CD14-positive monocyte (primary cell): ENCODE measurements at regions of chr17 and their contacts with region 1.

Region 1: DNA sequence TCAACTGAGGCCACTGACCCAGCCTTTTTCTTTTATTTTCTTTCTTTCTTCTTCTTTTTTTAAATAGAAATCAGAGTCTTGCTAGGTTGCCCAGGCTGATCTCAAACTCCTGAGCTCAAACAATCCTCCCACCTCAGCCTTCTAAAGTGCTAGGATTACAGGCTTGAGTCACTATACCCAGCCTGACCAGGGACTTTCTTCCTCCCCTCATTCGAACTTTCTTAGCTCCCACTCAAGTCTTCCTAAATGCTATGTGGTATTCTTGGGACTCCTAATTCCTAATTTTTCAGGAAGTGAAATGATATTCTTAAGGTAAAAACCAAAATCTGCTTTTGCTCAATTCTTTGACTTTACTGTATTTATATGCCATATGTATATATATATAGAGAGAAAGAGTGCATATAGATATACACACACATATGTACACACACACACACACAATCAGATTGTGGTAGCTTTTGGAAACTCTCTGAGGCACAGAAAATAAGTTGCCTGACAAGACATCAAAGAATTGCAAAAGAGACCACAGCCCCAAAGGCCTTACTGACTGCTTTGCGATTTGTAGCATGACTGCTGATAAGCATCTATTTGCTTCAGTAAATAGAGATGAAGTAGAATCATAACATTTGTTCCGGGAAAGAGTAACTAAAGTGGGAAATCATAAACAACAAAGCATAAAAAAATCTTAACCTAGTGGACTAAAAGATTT is 9.5 kb upstream of the AMZ2 start:
- DNase-seq: no peak
- H3K4me3 ChIP-seq: peak overlapping the region; percentile 23 to 50 (median 41)
- H3K4me3 Mint-ChIP-seq: peak overlapping the region; percentile 75 to 91
- H3K27ac ChIP-seq: peak overlapping the region; percentile 98 to 99
- H3K27ac Mint-ChIP-seq: peak overlapping the region; percentile 100
- H3K4me1 ChIP-seq: peaks cover 31 to 39% of the 10 kb centered on the region in 2 donors
- H3K4me1 Mint-ChIP-seq: peaks cover 36% of the 10 kb centered on the region
- H3K27me3 ChIP-seq: no peaks in the 10 kb centered on the region
- H3K27me3 Mint-ChIP-seq: peaks cover 0 to 1% (median 0%) of the 10 kb centered on the region in 3 donors
- CTCF ChIP-seq: no peak

Region 2: GRCh38 chr17:68273722-68274121 is 35.4 kb after region 1 on chr17:
- intact Hi-C with region 1: no loop called
- DNase-seq: peak in 1 of 3 donors; percentile 24
- H3K4me3 ChIP-seq: no peak overlapping the region
- H3K4me3 Mint-ChIP-seq: no peak overlapping the region
- H3K27ac ChIP-seq: peak overlapping the region in 1 of 2 donors; percentile 62
- H3K27ac Mint-ChIP-seq: peak overlapping the region in 6 of 7 donors; percentile 24 to 78 (median 72)
- H3K4me1 ChIP-seq: no peaks in the 10 kb centered on the region
- H3K4me1 Mint-ChIP-seq: peaks cover 5% of the 10 kb centered on the region
- H3K27me3 ChIP-seq: no peaks in the 10 kb centered on the region
- H3K27me3 Mint-ChIP-seq: no peaks in the 10 kb centered on the region
- CTCF ChIP-seq: no peak

Region 3: DNA sequence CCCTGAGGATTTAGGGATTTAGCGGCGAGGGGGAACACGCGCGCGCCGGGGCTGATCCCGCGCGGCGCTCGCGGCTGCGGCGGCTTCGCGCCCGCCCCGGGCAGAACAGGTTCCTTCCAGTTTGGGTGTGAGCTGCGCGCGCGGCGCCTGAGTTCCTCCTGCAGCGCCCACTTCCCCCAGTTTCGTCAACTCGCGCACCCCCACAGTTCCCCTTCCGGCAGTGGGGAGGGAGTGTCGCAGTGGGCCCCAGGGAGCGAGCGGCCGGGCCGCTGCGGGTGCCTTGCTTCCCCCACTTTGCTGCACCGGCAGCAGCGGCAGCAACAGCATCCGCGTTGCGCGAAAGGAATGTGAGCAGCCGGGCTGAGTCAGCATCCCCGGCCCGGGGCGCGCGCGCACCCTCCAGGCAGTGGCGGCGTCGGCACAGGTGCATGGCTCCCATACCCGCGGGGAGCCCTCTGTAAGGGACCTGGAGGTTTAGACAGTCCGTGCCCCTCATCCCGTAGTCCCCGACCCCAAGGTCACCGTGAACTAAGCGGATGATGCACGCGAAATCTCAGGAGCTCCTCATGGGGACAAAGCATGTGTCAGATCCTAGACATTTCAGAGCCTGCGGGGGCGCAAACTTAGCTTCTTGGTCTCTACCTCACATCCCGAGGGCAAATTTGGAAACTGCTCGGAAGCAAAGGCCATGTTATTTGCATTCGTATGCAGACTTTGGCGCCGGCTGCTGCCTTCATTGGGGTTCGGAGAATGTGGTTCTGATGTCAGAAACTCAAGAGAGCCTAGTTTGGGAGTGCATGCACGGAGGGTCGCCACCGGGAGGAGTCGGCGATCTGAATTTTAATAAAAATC is 53.8 kb after region 1 on chr17:
- intact Hi-C with region 1: loop called in 1 of 2 experiments (anchors 1 kb)
- DNase-seq: peak; percentile 96 to 99 (median 99)
- H3K4me3 ChIP-seq: peak overlapping the region; percentile 55 to 97 (median 87)
- H3K4me3 Mint-ChIP-seq: peak overlapping the region; percentile 77 to 87
- H3K27ac ChIP-seq: peak overlapping the region; percentile 96 to 97
- H3K27ac Mint-ChIP-seq: peak overlapping the region; percentile 91 to 97 (median 96)
- H3K4me1 ChIP-seq: peaks cover 76 to 82% of the 10 kb centered on the region in 2 donors
- H3K4me1 Mint-ChIP-seq: peaks cover 66% of the 10 kb centered on the region
- H3K27me3 ChIP-seq: no peaks in the 10 kb centered on the region
- H3K27me3 Mint-ChIP-seq: peaks cover 0 to 2% (median 2%) of the 10 kb centered on the region in 3 donors
- CTCF ChIP-seq: no peak